ENCODE measurements at regions of chr7 and their contacts with region 1.

Region 1: GRCh38 chr7:24701261-24702235 is 55.7 kb downstream of the GSDME start:
- DNase-seq: peak; percentile 95
- ATAC-seq: peak; percentile 92
- H3K4me3 ChIP-seq: no peak overlapping the region
- H3K27ac ChIP-seq: no peak overlapping the region
- H3K4me1 ChIP-seq: peaks cover 37% of the 10 kb centered on the region
- H3K27me3 ChIP-seq: no peaks in the 10 kb centered on the region
- CTCF ChIP-seq: no peak

Region 2: GRCh38 chr7:24668922-24669635 is 32.5 kb before region 1 on chr7:
- CTCF ChIA-PET with region 1: no interaction called
- POLR2A ChIA-PET with region 1: no interaction called
- intact Hi-C with region 1: no loop called
- DNase-seq: peak; percentile 43
- ATAC-seq: peak; percentile 94
- H3K4me3 ChIP-seq: no peak overlapping the region
- H3K27ac ChIP-seq: peak overlapping the region; percentile 64
- H3K4me1 ChIP-seq: peaks cover 21% of the 10 kb centered on the region
- H3K27me3 ChIP-seq: no peaks in the 10 kb centered on the region
- CTCF ChIP-seq: no peak

Region 3: DNA sequence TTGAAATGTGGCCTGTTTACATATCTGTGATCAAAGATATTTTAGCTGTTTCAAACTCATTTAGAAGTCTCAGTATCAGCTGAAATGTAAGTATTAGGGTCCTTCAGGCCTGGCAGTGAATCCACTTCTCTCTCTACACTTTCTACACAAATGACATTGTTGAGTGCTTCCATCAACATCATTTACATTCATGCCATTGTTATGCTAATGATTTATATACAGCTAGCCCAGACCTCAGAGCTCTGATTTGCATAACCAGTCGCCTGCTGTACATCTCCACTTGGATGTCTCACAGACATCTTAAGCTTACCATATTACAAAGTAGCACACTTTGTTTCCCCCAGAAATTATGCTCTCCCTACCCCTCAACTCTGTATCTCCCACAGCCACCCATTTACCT is 15.8 kb before region 1 on chr7:
- CTCF ChIA-PET with region 1: interaction called, 10 read pairs
- POLR2A ChIA-PET with region 1: no interaction called
- intact Hi-C with region 1: no loop called
- DNase-seq: no peak
- ATAC-seq: no peak
- H3K4me3 ChIP-seq: no peak overlapping the region
- H3K27ac ChIP-seq: no peak overlapping the region
- H3K4me1 ChIP-seq: no peaks in the 10 kb centered on the region
- H3K27me3 ChIP-seq: no peaks in the 10 kb centered on the region
- CTCF ChIP-seq: no peak

Measured in PC-3 (cell line).